ENCODE measurements at regions of chr6 and their contacts with region 1.

Region 1: DNA sequence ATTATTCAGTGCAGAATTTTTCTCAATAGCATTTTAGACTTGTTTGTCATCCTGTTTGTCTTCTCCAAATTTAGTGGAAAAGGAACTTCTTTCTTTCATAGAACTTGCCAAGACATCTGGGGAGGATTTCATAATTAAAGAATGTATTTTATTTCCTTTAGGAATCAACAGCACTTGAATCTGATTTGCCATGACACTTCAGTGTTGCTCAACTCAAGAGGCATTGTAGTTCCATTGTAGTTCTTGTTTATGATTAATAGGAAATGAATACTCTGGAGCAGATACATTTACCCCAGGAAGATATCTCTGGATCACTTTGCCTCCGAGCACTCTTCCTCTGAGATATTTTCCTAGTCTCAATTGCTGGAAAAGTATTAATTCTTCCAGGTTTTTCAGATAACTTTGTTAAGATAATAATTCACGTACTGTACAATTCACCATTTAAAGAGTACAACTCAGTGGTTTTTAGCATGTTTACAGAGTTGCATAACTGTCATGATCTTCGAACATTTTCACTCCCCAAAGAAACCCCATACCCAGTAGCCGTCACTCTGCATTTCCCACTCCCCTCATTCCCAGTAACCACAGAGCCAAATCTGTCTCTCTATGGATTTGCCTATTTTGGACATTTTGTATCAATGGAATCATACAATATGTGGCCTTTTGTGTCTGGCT is 29.7 kb downstream of the AKAP12 start:
- DNase-seq: peak; percentile 65
- H3K4me3 ChIP-seq: no peak overlapping the region
- H3K27ac ChIP-seq: no peak overlapping the region
- H3K4me1 ChIP-seq: peaks cover 18% of the 10 kb centered on the region
- H3K27me3 ChIP-seq: no peaks in the 10 kb centered on the region
- CTCF ChIP-seq: no peak
- POLR2A ChIP-seq: no peak

Region 2: DNA sequence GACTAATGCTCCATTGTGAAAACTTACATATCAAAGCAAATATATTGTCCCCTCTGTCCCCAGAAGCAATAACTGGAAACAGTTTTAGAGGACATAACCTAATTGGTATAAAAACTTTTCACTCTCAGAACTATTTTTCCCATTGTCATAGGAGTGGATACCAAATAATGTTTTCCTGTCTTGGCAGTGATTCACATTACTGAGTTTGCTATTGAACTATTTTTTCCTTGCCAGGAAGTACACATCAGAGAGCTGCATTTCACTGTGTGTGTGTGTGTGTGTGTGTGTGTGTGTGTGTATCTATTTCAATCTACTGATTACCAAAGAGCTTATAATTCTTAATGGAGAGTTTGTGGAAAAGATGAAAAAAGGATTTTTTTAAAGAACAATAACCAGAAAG is 15.7 kb after region 1 on chr6:
- CTCF ChIA-PET with region 1: interaction called, 4 read pairs
- POLR2A ChIA-PET with region 1: no interaction called
- dilution Hi-C with region 1: no loop called
- intact Hi-C with region 1: loop called (anchors 2 kb)
- DNase-seq: peak; percentile 90
- H3K4me3 ChIP-seq: peak overlapping the region in 1 of 3 experiments; percentile 21
- H3K27ac ChIP-seq: peak overlapping the region; percentile 85
- H3K4me1 ChIP-seq: peaks cover 36% of the 10 kb centered on the region
- H3K27me3 ChIP-seq: no peaks in the 10 kb centered on the region
- CTCF ChIP-seq: no peak
- POLR2A ChIP-seq: no peak